Activated T-helper 1 cell treated with anti-CD3 and anti-CD28 coated beads, Interleukin-12 subunit alpha, Interleukin-12 subunit beta, Interleukin-2, Interleukin-4 antibody, amounts not matched to agents 30 ng/mL and 10 ng/mL and 1 ng/mL, durations not matched to agents 14 hours and 24 hours and 36 hours (primary cell): ENCODE measurements at regions of chr13 and their contacts with region 1.

Region 1: GRCh38 chr13:50893211-50893852 is 16.3 kb upstream of the RNASEH2B start:
- DNase-seq: peak; percentile 40
- H3K4me3 Mint-ChIP-seq: peak overlapping the region; percentile 77
- H3K27ac Mint-ChIP-seq: peak overlapping the region; percentile 87
- H3K4me1 Mint-ChIP-seq: peaks cover 49% of the 10 kb centered on the region
- H3K27me3 Mint-ChIP-seq: no peaks in the 10 kb centered on the region

Region 2: GRCh38 chr13:50334115-50334778 is 559.1 kb before region 1 on chr13:
- intact Hi-C with region 1: no loop called
- DNase-seq: no peak
- H3K4me3 Mint-ChIP-seq: no peak overlapping the region
- H3K27ac Mint-ChIP-seq: no peak overlapping the region
- H3K4me1 Mint-ChIP-seq: no peaks in the 10 kb centered on the region
- H3K27me3 Mint-ChIP-seq: peaks cover 8% of the 10 kb centered on the region

Region 3: DNA sequence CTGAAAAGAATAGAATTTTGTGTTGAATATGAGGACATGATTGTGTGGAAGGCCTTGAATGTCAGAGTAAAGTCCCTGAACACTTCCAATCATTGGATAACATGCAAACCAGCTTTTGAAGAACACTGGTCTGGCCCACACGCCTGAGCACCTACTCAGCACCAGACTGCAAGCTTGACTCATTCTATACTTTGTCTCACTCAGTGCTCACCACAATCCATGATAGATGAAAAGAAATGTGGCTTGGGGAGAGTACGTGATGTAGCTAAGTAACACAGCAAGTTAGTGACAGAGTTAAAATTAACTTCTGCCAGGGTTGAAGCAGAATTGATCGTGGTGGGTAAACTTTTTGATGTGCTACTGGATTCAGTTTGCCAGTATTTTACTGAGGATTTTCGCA is 61.8 kb before region 1 on chr13:
- intact Hi-C with region 1: loop called (anchors 1 kb)
- DNase-seq: no peak
- H3K4me3 Mint-ChIP-seq: no peak overlapping the region
- H3K27ac Mint-ChIP-seq: no peak overlapping the region
- H3K4me1 Mint-ChIP-seq: peaks cover 15% of the 10 kb centered on the region
- H3K27me3 Mint-ChIP-seq: peaks cover 17% of the 10 kb centered on the region